Posterior cingulate gyrus (tissue), 11 donors: ENCODE measurements at regions of chr3 and their contacts with region 1.

Region 1: DNA sequence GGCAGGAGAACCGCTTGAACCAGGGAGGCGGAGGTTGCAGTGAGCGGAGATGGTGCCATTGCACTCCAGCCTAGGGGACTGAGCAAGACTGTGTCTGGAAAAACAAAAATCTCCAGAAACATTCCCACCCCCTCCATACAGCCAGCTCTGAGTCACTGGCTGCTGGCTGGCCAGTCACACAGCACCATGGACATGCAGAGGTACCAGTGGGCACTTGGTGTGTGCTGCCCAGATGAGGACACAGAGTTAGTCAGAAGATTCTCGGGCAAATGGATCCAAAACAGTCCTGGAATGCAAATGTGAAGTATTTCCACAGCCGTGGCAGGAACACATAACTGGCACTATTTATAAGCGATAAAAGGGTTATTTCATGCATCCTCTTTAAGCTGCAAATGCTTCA is 44.6 kb downstream of the BDH1 start:
- DNase-seq: peak in 7 of 10 donors; percentile 40 to 93 (median 66)

Region 2: DNA sequence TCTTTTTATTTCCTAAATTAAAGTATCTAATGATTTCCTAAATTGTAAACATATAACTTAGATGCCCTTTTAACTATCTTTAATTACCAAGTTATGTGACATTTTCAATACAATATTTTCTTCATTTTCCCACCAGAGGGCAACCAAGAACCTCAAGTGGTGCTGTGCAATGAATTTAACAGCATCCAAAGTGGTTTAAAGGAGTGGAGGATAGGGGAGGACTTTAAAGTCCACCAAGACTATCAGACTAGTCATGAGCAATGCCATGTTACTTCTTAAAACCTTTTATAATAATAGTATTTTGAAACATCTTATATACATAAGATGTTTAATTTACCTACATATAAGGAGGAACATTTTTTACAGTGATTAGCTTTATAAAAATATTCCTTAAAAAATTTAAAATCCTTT is 287.1 kb before region 1 on chr3:
- intact Hi-C with region 1: loop called (anchors 2 kb)
- DNase-seq: no peak